A549 (cell line): ENCODE measurements at regions of chr17 and their contacts with region 1.

Region 1: DNA sequence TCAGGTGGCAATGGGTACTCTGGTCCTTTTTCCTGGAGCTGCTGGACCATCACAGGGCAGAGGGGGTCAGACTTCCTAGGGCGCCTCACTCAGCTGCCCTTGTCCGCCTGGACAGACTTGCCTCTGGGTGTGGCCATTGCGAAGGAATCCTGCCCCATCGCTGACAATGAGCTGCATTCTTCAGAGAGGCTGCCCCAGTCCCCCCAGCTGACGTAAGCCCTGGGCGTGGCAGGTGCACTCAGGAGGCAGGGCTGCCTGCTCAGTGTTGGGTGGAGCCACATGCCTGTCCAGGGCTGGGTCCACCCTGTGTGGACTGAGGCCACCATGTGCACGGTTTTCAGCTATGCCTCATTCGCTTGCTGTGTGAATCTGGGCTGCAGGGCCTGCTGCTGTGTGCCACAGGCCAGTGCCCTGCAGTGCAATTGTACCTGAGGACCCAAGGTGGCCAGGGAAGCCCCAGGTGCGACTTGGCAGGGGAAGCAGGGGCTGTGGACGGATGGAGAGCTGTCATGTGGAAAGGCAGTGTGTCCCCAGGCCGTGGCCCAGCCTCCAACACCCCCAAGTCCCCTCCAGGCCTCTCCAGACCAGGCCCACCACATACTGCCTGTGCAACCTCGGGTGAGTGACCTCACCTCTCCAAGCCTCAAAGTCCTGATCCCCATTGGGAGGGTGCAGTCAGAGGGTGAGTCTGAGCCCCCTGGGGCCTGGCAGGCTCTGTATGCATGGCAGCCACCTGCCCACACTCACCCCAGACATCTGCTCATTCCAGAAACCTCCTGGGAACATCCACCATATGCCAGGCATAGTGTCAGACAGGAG is 14.0 kb upstream of the MPRIP start:
- DNase-seq: peak; percentile 99 to 100
- ATAC-seq: peak; percentile 90 to 94
- H3K4me3 ChIP-seq: peak overlapping the region; percentile 29
- H3K27ac ChIP-seq: peak overlapping the region; percentile 94 to 98
- H3K4me1 ChIP-seq: peaks cover 89% of the 10 kb centered on the region
- CTCF ChIP-seq: no peak
- EP300 ChIP-seq: peak; percentile 74 to 83; a peak in 3 of 5 replicates
- POLR2A ChIP-seq: peak; percentile 63
- RAD21 ChIP-seq: peak; percentile 11 to 43; a peak in 3 of 5 replicates

Region 2: DNA sequence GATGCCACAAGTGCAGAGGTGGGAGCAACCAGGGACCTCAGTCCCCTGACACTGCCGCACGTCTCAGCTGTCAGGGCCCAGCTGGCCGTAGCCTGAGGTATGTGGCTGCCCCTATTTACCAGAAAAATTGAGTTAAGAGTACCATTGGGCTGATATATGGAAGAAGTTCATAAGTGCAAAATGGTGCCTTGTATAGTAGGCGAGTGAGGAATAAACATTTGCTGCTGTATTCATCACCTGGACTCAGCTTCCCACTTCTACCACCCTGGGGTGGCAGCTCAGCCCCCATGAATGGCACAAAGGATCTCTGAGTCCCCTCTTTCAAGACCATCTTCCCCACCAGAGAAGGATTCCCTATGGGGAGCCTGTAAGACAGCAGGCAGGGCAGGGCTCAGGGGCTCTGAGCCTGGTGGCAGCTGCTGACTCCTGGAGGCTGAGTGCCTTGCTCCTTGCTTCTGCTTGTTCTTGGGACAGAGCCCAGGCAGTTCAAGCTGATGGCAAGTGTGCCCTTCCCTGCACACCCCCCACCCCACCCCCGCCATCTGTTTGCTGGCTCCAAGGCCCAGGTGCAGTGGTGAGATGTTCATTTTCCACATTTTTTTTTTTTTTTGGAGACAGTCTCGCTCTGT is 583.9 kb before region 1 on chr17:
- CTCF ChIA-PET with region 1: no interaction called
- POLR2A ChIA-PET with region 1: no interaction called
- DNase-seq: peak in 1 of 2 experiments; percentile 37
- ATAC-seq: peak; percentile 19 to 28; a peak in 4 of 6 replicates
- H3K4me3 ChIP-seq: no peak overlapping the region
- H3K27ac ChIP-seq: peak overlapping the region in 1 of 2 experiments; percentile 99; a peak in 3 of 6 replicates
- H3K4me1 ChIP-seq: peaks cover 48% of the 10 kb centered on the region
- CTCF ChIP-seq: no peak
- EP300 ChIP-seq: no peak
- POLR2A ChIP-seq: no peak
- RAD21 ChIP-seq: no peak

Region 3: DNA sequence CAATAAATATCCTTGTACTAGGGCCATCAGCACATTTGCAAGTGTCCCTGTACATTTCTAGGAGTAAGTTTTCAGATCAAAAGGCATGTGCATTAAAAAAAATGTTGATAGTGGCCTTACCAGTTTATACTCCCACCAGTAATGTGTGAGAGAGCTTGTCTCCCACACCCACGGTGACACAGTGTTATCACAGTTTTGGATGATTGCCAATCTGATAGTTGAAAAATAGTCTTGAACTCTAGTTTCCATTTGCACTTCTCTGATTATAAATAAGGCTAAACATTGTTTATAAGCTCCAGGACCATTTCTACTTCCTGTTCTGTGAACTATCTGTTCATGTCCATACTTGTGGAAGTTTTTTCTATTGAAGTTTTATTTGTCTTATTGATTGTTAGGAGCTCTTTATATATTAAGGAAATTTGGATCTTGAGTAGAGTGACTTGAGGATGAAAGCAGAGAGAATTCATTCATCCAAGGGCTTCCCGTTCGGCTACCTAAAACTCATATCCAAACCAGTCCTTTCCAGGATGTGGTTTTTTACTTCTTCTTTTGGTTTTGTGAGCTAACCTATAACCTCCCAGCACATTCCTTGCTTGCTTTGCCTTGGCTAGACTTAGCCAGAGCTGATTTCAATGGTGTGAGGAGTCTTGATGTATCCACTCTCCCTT is 11.9 kb before region 1 on chr17:
- CTCF ChIA-PET with region 1: interaction called, 13 read pairs
- POLR2A ChIA-PET with region 1: interaction called, 8 read pairs
- DNase-seq: no peak
- ATAC-seq: no peak
- H3K4me3 ChIP-seq: no peak overlapping the region
- H3K27ac ChIP-seq: peak overlapping the region; percentile 94 to 98
- H3K4me1 ChIP-seq: peaks cover 67% of the 10 kb centered on the region
- CTCF ChIP-seq: no peak
- EP300 ChIP-seq: no peak
- POLR2A ChIP-seq: no peak
- RAD21 ChIP-seq: no peak

Region 4: GRCh38 chr17:17041571-17042380 is 13.5 kb after region 1 on chr17:
- CTCF ChIA-PET with region 1: interaction called, 13 read pairs
- POLR2A ChIA-PET with region 1: interaction called, 19 read pairs
- DNase-seq: peak; percentile 97 to 99
- ATAC-seq: peak; percentile 90 to 95
- H3K4me3 ChIP-seq: peak overlapping the region; percentile 90
- H3K27ac ChIP-seq: peak overlapping the region; percentile 87 to 91
- H3K4me1 ChIP-seq: peaks cover 47% of the 10 kb centered on the region
- CTCF ChIP-seq: no peak
- EP300 ChIP-seq: no peak
- POLR2A ChIP-seq: no peak
- RAD21 ChIP-seq: 0 out of 5 replicates have a peak, but pooled peaks of 1 of the 2 experiments have one; percentile 19

Region 5: DNA sequence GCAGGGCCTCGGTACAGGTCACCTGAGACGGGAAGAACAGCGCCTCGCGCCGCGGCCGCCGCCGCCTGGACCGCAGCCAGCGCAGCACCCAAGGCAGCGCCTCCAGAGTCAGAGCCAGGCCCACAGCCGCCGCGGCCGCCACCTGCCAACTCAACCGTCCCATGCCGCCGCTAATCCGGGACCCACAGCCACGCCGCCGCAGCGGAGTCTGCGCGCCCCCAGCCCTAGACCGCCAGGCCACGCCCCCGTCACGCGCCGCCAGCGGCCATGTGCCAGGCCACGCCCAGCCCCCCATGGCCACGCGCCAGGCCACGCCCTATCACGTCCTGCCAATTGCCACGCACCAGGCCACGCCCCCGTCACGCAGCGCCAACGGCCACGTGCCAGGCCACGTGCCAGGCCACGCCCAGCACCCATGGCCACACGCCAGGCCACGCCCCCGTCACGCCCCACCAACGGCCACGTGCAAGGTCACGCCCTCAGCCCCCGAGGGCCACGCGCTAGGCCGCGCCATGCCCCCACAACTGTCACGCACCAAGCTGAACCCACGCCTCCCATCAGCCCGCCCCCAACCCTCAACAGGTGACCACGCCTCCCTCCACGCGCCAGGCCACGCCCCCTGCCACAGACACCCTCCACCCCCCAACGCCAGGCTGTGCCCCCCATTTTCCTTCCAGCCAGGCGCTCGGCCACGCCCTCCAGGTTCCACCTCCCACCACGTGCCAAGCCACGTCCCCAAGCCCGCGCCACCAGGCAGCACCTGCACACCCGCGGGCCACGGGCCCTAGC is 178.1 kb after region 1 on chr17 and contains the start of gene PLD6:
- CTCF ChIA-PET with region 1: no interaction called
- POLR2A ChIA-PET with region 1: no interaction called
- DNase-seq: peak; percentile 72 to 93
- ATAC-seq: peak; percentile 59 to 60
- H3K4me3 ChIP-seq: peak within 1 kb of the TSS; percentile 78
- H3K27ac ChIP-seq: peak within 1 kb of the TSS; percentile 84 to 89
- H3K4me1 ChIP-seq: peaks cover 19% of the 10 kb centered on the region
- CTCF ChIP-seq: no peak
- EP300 ChIP-seq: no peak
- POLR2A ChIP-seq: peak; percentile 46; the same call in 1 of the 2 replicates
- RAD21 ChIP-seq: no peak
- polyA plus RNA-seq, gene PLD6: 5.4 and 5.7 TPM in 2 replicates